ENCODE measurements at regions of chr13 and their contacts with region 1.

Region 1: GRCh38 chr13:50123862-50124536 is 108.8 kb downstream of the KCNRG start:
- DNase-seq: peak in 7 of 9 donors; percentile 46 to 88 (median 64)
- ATAC-seq: peak; percentile 82
- H3K4me3 ChIP-seq: peak overlapping the region; percentile 52
- H3K4me3 Mint-ChIP-seq: peak overlapping the region; percentile 86 to 96 (median 93)
- H3K27ac ChIP-seq: peak overlapping the region; percentile 95
- H3K27ac Mint-ChIP-seq: peak overlapping the region; percentile 90 to 99 (median 97)
- H3K4me1 ChIP-seq: peaks cover 24 to 29% of the 10 kb centered on the region in 2 donors
- H3K4me1 Mint-ChIP-seq: peaks cover 25 to 61% (median 50%) of the 10 kb centered on the region in 7 donors
- H3K27me3 ChIP-seq: peaks cover 0 to 11% of the 10 kb centered on the region in 2 donors
- H3K27me3 Mint-ChIP-seq: peaks cover 1 to 15% (median 12%) of the 10 kb centered on the region in 5 donors

Region 2: DNA sequence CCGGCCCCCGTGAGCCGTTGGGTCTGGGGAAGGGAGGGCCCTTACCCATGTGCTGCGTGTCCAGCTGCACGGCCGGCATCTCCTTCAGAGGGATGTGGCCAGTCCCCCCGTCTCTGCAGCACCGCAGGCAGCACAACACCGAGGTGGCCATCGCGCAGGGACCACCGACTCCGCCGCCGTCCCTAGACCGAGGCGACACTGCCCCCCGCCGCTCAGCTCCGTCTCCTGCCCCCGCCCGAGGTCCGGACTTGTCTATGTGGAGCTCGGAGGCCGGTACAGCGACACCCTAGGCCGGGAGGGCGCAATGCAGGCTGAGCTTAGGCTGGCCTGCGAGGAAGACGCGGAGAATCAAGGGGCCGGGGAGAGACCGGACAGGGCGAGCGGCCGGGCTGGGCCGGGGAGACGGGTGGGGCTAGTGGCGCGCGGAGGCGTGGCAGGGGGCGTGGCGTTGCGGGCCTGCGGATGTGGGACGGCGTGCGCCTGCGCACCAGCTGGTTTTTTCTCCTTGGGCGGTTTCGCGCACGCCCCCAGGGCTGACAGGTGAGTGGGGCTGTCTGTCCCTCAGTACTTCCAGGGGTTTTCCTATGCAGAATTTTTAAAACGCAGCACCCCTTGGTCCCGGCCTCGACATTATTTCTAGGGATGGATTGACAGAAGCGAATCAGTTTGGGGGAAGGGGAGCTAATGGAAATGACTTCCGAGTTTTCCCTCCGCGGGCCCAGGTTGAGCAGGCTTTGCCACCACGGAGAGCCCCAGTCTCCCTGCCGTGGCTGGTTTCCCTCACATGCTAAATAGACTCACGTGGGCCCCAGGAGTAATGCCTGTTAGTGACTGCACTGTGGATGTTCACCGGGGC is 187.7 kb before region 1 on chr13 and contains the start of gene SPRYD7:
- CTCF ChIA-PET with region 1: interaction called, 5 read pairs
- POLR2A ChIA-PET with region 1: interaction called, 7 read pairs
- intact Hi-C with region 1: loop called (anchors 1 to 5 kb)
- DNase-seq: peak; percentile 82 to 99 (median 90)
- ATAC-seq: peak; percentile 98
- H3K4me3 ChIP-seq: peak within 1 kb of the TSS; percentile 99
- H3K4me3 Mint-ChIP-seq: peak within 1 kb of the TSS; percentile 86 to 99 (median 96)
- H3K27ac ChIP-seq: peak within 1 kb of the TSS; percentile 69
- H3K27ac Mint-ChIP-seq: peak within 1 kb of the TSS; percentile 74 to 95 (median 86)
- H3K4me1 ChIP-seq: peaks cover 10 to 14% of the 10 kb centered on the region in 2 donors
- H3K4me1 Mint-ChIP-seq: peaks cover 12 to 28% (median 15%) of the 10 kb centered on the region in 7 donors
- H3K27me3 ChIP-seq: no peaks in the 10 kb centered on the region
- H3K27me3 Mint-ChIP-seq: peaks cover 0 to 33% (median 0%) of the 10 kb centered on the region in 5 donors
- total RNA-seq, gene SPRYD7: 1.7 to 3.1 (median 2.3) TPM

Region 3: GRCh38 chr13:50236898-50237318 is 112.9 kb after region 1 on chr13:
- CTCF ChIA-PET with region 1: no interaction called
- POLR2A ChIA-PET with region 1: interaction called, 4 read pairs
- intact Hi-C with region 1: loop called in 1 of 2 experiments (anchors 5 kb)
- DNase-seq: peak in 4 of 9 donors; percentile 5 to 38 (median 14)
- ATAC-seq: peak; percentile 88
- H3K4me3 ChIP-seq: peak overlapping the region; percentile 43
- H3K4me3 Mint-ChIP-seq: peak overlapping the region; percentile 38 to 78 (median 65)
- H3K27ac ChIP-seq: no peak overlapping the region
- H3K27ac Mint-ChIP-seq: peak overlapping the region; percentile 3 to 66 (median 15)
- H3K4me1 ChIP-seq: peaks cover 5 to 8% of the 10 kb centered on the region in 2 donors
- H3K4me1 Mint-ChIP-seq: peaks cover 6 to 40% (median 19%) of the 10 kb centered on the region in 7 donors
- H3K27me3 ChIP-seq: no peaks in the 10 kb centered on the region
- H3K27me3 Mint-ChIP-seq: peaks cover 0 to 68% (median 0%) of the 10 kb centered on the region in 5 donors

Region 4: GRCh38 chr13:50801087-50801931 is 677.3 kb after region 1 on chr13:
- CTCF ChIA-PET with region 1: no interaction called
- POLR2A ChIA-PET with region 1: no interaction called
- intact Hi-C with region 1: loop called (anchors 1 to 5 kb)
- DNase-seq: peak; percentile 13 to 71 (median 56)
- ATAC-seq: peak; percentile 96
- H3K4me3 ChIP-seq: no peak overlapping the region
- H3K4me3 Mint-ChIP-seq: peak overlapping the region in 1 of 10 donors; percentile 39
- H3K27ac ChIP-seq: no peak overlapping the region
- H3K27ac Mint-ChIP-seq: peak overlapping the region in 1 of 9 donors; percentile 20
- H3K4me1 ChIP-seq: peaks cover 0 to 3% of the 10 kb centered on the region in 2 donors
- H3K4me1 Mint-ChIP-seq: peaks cover 0 to 26% (median 6%) of the 10 kb centered on the region in 7 donors
- H3K27me3 ChIP-seq: no peaks in the 10 kb centered on the region
- H3K27me3 Mint-ChIP-seq: peaks cover 0 to 8% (median 0%) of the 10 kb centered on the region in 5 donors

Region 5: GRCh38 chr13:50826035-50826434 is 702.0 kb after region 1 on chr13:
- CTCF ChIA-PET with region 1: no interaction called
- POLR2A ChIA-PET with region 1: no interaction called
- intact Hi-C with region 1: no loop called
- DNase-seq: no peak
- ATAC-seq: no peak
- H3K4me3 ChIP-seq: no peak overlapping the region
- H3K4me3 Mint-ChIP-seq: peak overlapping the region in 1 of 10 donors; percentile 30
- H3K27ac ChIP-seq: no peak overlapping the region
- H3K27ac Mint-ChIP-seq: peak overlapping the region in 1 of 9 donors; percentile 17
- H3K4me1 ChIP-seq: no peaks in the 10 kb centered on the region
- H3K4me1 Mint-ChIP-seq: no peaks in the 10 kb centered on the region
- H3K27me3 ChIP-seq: no peaks in the 10 kb centered on the region
- H3K27me3 Mint-ChIP-seq: peaks cover 0 to 22% (median 6%) of the 10 kb centered on the region in 5 donors

Region 6: GRCh38 chr13:51825165-51825592 is 1701.2 kb after region 1 on chr13:
- CTCF ChIA-PET with region 1: no interaction called
- POLR2A ChIA-PET with region 1: interaction called, 6 read pairs
- intact Hi-C with region 1: loop called in 1 of 2 experiments (anchors 2 kb)
- DNase-seq: peak in 7 of 9 donors; percentile 62 to 90 (median 84)
- ATAC-seq: peak; percentile 81
- H3K4me3 ChIP-seq: peak overlapping the region; percentile 75
- H3K4me3 Mint-ChIP-seq: peak overlapping the region; percentile 62 to 100 (median 97)
- H3K27ac ChIP-seq: peak overlapping the region; percentile 85
- H3K27ac Mint-ChIP-seq: peak overlapping the region; percentile 86 to 99 (median 95)
- H3K4me1 ChIP-seq: peaks cover 61 to 78% of the 10 kb centered on the region in 2 donors
- H3K4me1 Mint-ChIP-seq: peaks cover 57 to 80% (median 63%) of the 10 kb centered on the region in 7 donors
- H3K27me3 ChIP-seq: no peaks in the 10 kb centered on the region
- H3K27me3 Mint-ChIP-seq: peaks cover 0 to 10% (median 0%) of the 10 kb centered on the region in 5 donors

Measured in naive thymus-derived CD4-positive, alpha-beta T cell (primary cell).